Ascending aorta (tissue), 2 donors: ENCODE measurements at regions of chr5 and their contacts with region 1.

Region 1: DNA sequence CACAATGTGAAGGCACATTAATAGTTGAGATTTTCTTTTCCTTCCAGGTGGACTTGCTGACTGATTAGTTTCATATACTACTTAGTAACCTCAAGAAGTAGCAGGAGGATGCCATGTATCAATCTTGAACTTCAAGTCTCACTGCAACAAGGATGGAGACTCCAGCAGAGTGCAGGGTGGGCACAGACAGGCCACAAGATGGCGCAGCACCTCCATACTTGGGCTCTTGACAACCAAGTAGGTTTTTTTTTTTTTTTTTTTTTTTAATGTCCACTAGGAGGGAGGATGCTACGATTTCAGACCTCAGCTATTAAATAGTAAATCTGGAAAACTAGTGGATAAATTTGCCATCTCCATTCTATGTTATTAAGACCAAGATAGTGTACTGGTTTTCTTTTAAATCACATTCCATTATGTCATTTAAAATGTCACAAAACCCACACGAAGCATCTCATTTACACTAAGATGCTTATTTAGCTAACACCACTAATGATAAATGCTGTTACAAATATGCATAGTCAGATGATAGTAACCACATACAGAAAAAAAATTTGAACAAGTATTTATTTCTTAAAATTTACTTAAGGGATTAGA is 58.6 kb downstream of the IL6ST start:
- DNase-seq: peak in 1 of 2 donors; percentile 81
- H3K4me3 ChIP-seq: no peak overlapping the region
- H3K27ac ChIP-seq: no peak overlapping the region
- H3K4me1 ChIP-seq: peaks cover 0 to 4% of the 10 kb centered on the region in 2 donors
- H3K27me3 ChIP-seq: no peaks in the 10 kb centered on the region
- CTCF ChIP-seq: peak; percentile 67 to 75 (median 68)

Region 2: GRCh38 chr5:55758231-55758630 is 178.0 kb before region 1 on chr5:
- intact Hi-C with region 1: no loop called
- DNase-seq: no peak
- H3K4me3 ChIP-seq: no peak overlapping the region
- H3K27ac ChIP-seq: no peak overlapping the region
- H3K4me1 ChIP-seq: no peaks in the 10 kb centered on the region
- H3K27me3 ChIP-seq: no peaks in the 10 kb centered on the region
- CTCF ChIP-seq: no peak

Region 3: DNA sequence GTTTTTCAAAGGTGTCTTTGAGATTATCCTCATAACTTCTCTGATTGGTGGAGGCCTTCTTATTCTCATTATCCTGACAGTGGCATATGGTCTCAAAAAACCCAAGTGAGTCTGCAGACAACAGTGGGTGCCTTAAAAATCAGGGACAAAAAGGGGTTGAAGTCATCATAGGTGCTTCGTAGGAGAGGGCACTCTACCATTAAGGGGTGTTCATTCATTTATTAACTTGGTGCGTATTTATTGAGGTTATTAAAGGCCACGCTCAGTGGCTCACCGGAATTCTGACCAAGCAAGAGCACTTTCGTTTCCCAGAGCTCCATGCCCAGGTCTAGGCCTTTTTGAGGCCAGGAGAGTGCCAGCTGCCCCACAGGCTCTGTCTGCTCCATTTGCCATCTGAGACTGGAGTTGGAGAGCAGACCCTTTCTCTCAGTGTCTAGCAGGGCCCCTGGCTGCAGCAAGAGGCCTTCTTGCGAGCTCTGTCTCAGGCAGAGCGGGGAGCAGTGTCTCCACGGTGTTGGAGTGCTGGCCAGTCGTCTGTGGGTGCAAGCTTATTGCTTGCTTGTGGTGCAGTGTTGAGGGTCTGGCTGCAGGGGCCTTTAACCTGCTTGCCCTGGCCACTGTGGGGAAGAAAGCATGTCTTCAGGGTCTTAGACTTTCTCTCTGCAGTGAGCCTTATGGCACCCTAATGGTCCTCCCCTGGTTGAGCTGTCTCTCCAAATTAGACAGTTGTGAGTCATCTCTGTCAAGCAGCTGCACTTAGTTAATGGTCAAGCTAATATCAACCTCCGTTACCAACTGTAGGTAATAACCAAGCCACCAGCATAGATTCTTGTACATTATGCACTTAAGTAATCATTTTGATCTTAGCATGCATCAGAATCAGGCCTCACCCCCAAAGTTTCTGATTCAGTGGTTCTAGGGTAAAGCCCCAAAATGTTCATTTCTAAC is 22.5 kb before region 1 on chr5:
- intact Hi-C with region 1: no loop called
- DNase-seq: no peak
- H3K4me3 ChIP-seq: no peak overlapping the region
- H3K27ac ChIP-seq: no peak overlapping the region
- H3K4me1 ChIP-seq: no peaks in the 10 kb centered on the region
- H3K27me3 ChIP-seq: no peaks in the 10 kb centered on the region
- CTCF ChIP-seq: no peak

Region 4: DNA sequence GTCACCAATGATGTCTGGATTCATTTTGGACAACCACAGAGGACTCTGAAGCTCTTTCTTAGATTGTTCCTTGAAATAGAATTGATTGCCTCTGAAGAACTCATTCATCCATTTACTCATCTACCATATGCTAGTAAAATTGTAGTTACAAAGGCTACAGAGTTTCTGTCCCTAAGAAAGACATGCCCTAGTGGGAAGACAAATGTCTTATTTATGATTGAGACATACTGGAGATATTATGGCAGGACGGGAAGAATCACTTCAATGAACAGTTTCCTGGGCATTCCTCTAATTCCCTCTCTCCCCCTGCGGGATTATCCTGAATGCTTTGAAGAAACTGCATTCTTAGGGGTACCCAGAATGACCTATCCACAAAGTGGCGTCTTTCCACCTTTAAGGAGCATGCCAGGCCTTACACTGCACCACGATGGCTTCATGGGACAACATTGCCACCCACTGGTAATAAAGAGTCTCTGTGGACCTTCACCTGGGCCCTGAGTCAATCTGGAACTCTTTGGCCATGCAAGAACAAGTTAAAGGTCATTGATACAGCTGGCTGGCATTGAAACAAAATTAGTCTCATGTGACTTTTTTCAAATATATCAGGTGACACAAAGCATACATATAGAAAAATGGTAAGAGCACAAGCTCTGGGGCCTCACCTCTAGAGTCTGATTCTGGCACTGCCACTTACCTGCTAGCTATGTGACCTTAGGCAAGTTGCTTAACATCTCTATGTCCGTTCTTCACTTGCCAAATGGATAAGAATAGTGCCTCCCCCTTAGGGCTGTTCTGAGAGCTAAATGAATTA is 264.9 kb after region 1 on chr5:
- intact Hi-C with region 1: loop called (anchors 2 kb)
- DNase-seq: peak in 1 of 2 donors; percentile 72
- H3K4me3 ChIP-seq: no peak overlapping the region
- H3K27ac ChIP-seq: no peak overlapping the region
- H3K4me1 ChIP-seq: no peaks in the 10 kb centered on the region
- H3K27me3 ChIP-seq: no peaks in the 10 kb centered on the region
- CTCF ChIP-seq: peak; percentile 56 to 65 (median 63)

Region 5: GRCh38 chr5:56543441-56544390 is 607.5 kb after region 1 on chr5:
- intact Hi-C with region 1: no loop called
- DNase-seq: no peak
- H3K4me3 ChIP-seq: no peak overlapping the region
- H3K27ac ChIP-seq: no peak overlapping the region
- H3K4me1 ChIP-seq: no peaks in the 10 kb centered on the region
- H3K27me3 ChIP-seq: no peaks in the 10 kb centered on the region
- CTCF ChIP-seq: no peak

Region 6: DNA sequence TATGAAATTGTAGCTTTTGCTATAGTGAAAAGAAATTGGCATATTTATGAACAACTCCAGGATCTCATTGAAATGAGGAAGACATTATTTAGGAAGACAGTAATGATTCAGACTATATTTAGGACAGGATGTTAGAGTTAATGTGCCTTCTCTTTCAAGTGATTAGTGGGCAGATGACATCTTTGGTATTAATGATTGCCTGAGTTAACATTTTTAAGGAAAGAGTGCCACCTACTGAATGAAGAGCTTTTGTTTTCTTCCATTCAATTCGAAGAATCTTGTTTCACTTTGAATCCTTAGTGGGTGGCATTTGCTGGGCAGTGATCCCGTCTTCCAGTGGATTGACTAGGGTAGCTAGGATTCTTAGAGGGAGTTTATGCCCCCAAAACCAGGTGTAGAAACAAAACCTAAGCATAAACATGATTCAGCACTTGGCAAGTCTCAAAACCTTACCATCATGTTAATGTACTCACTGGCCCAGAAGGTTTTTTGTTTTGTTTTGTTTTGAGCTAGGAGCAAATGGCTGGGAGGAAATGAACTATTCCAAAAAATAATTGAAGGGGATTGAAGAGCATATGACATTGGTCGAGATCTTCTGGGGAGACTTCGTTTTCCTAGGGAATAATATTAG is 902.3 kb after region 1 on chr5:
- intact Hi-C with region 1: loop called (anchors 10 kb)
- DNase-seq: no peak
- H3K4me3 ChIP-seq: peak overlapping the region; percentile 12 to 38
- H3K27ac ChIP-seq: peak overlapping the region; percentile 28 to 34
- H3K4me1 ChIP-seq: no peaks in the 10 kb centered on the region
- H3K27me3 ChIP-seq: no peaks in the 10 kb centered on the region
- CTCF ChIP-seq: peak; percentile 57 to 62 (median 60)